Activated CD4-positive, alpha-beta T cell treated with anti-CD3 and anti-CD28 coated beads, Interleukin-2, amount 10 ng/mL, durations not matched to agents 7 days and 5 days (primary cell): ENCODE measurements at regions of chr1 and their contacts with region 1.

Region 1: GRCh38 chr1:151475175-151475574 is 15.9 kb upstream of the POGZ start:
- DNase-seq: no peak
- H3K4me3 Mint-ChIP-seq: no peak overlapping the region
- H3K27ac Mint-ChIP-seq: no peak overlapping the region
- H3K4me1 Mint-ChIP-seq: peaks cover 13% of the 10 kb centered on the region
- H3K27me3 Mint-ChIP-seq: peaks cover 5% of the 10 kb centered on the region

Region 2: GRCh38 chr1:151281225-151281968 is 193.8 kb before region 1 on chr1:
- CTCF ChIA-PET with region 1: no interaction called
- POLR2A ChIA-PET with region 1: no interaction called
- DNase-seq: peak; percentile 96
- H3K4me3 Mint-ChIP-seq: peak overlapping the region; percentile 99
- H3K27ac Mint-ChIP-seq: peak overlapping the region; percentile 99
- H3K4me1 Mint-ChIP-seq: peaks cover 26% of the 10 kb centered on the region
- H3K27me3 Mint-ChIP-seq: no peaks in the 10 kb centered on the region

Region 3: GRCh38 chr1:151465026-151465425 is 10.1 kb before region 1 on chr1:
- CTCF ChIA-PET with region 1: interaction called, 24 read pairs
- POLR2A ChIA-PET with region 1: no interaction called
- DNase-seq: no peak
- H3K4me3 Mint-ChIP-seq: no peak overlapping the region
- H3K27ac Mint-ChIP-seq: no peak overlapping the region
- H3K4me1 Mint-ChIP-seq: peaks cover 5% of the 10 kb centered on the region
- H3K27me3 Mint-ChIP-seq: peaks cover 30% of the 10 kb centered on the region